PC-9 (cell line): ENCODE measurements at regions of chr2 and their contacts with region 1.

Region 1: GRCh38 chr2:71226965-71227560 is at the start of gene PAIP2B:
- DNase-seq: peak; percentile 98 to 100
- H3K4me3 ChIP-seq: peak within 1 kb of the TSS; percentile 69
- H3K27ac ChIP-seq: no peak within 1 kb of the TSS
- H3K4me1 ChIP-seq: peaks cover 10% of the 10 kb centered on the region
- H3K27me3 ChIP-seq: no peaks in the 10 kb centered on the region
- CTCF ChIP-seq: 0 out of 2 replicates have a peak, but pooled peaks have one; percentile 2
- total RNA-seq, gene PAIP2B: 5.4 and 6.1 TPM in 2 replicates

Region 2: DNA sequence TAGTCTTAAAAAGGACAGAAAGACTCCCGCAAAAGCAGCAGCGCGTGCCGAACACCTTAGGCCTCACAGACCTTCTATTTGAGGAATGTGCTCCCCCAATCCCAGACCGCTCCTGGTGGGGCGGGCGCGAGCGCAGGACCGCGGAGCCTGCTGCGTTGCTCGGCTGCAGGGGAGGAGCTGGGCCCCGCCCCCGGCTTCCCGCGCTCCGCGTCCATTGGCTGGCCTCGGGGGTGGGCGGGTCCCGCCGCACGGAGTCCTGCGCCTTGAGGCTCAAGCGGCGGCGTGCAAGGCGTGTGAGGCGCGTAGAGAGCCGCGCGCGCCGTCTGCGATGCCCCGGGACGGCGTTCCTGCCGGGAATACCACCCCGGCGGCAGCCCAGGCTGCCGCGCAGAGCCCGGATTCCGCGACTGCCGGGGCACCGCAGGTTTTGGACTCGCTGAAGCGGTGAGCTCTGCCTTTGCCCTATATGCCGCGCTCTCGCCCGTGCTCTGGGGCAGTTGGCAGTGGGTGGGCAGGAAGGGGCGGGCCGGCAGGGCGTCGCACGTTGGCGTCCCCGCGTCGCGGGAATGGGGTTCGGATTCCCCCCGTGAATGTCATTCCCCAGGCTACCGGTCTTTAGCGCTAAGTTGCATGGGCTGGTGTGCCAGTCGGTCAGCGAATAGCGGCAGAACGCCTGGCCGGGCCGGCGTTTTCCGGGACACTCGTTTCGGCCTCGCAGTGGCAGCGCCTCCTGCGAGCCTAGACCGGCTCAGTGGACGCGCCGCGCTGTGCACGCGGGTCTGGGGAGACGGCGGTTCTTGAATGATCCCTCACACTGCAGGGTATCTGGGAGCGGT is 49.5 kb after region 1 on chr2:
- CTCF ChIA-PET with region 1: interaction called, 5 read pairs
- POLR2A ChIA-PET with region 1: no interaction called
- intact Hi-C with region 1: loop called (anchors 2 kb)
- DNase-seq: peak; percentile 84 to 95
- H3K4me3 ChIP-seq: peak overlapping the region; percentile 62
- H3K27ac ChIP-seq: no peak overlapping the region
- H3K4me1 ChIP-seq: peaks cover 19% of the 10 kb centered on the region
- H3K27me3 ChIP-seq: no peaks in the 10 kb centered on the region
- CTCF ChIP-seq: no peak

Region 3: DNA sequence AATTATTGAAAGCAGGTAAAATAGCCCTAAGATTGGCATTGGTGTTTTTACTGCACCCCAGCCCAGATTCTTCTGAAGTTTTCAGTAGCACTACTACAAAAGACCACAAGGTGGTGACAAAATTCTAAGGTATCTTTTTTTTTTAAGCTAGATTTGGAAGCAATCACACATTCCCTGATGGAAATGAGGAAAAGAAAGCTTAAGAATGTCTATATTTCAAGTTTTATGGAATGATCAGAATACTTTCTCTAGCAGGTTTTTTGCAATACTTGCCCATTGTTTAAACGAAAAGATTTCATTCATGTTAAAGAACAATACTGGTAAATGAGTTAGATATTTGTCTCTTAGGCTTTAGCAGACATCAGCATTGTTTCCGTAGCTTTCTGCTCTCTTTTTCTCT is 72.4 kb after region 1 on chr2:
- CTCF ChIA-PET with region 1: no interaction called
- POLR2A ChIA-PET with region 1: no interaction called
- intact Hi-C with region 1: loop called (anchors 2 kb)
- DNase-seq: no peak
- H3K4me3 ChIP-seq: no peak overlapping the region
- H3K27ac ChIP-seq: no peak overlapping the region
- H3K4me1 ChIP-seq: no peaks in the 10 kb centered on the region
- H3K27me3 ChIP-seq: no peaks in the 10 kb centered on the region
- CTCF ChIP-seq: peak; percentile 90

Region 4: DNA sequence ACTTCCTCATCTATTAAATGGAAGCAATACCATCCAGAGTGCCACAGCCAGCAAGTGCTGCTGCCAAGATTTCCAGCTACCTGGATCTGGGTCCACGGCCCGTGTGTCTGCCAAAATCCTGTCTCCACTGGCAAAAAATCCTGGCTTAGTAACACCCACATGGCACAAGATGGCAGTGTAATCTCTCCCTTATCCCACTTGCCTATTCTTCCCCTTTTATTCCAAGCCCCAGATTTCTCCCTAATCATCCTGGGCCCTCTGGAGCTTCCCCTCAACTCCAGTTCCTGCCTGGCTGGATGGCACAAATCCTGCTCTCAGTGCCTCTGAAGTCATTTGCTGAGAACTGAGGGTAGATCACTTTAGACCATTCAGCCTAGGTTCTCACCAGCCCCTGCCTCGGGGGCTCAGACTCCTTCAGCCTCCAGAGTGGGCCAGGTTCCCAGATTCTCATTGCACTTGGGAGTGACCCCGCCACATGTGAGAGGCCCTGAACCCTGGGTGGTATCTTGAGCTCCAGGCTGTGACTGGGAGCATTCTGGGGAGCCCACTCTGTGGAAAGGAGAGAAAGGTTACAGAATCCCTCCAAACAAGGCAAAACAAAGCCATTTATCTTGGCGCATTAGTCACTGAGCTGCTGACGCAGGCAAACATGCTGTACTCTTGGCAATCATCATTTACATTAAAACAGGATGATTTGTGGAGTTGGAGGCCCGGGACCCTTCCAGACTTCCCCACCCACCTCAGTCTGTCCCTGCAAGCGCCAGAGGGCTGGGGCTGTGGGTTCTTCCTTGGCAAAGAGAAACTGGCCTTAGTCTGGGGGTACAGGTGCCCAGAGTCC is 552.1 kb after region 1 on chr2:
- CTCF ChIA-PET with region 1: no interaction called
- POLR2A ChIA-PET with region 1: no interaction called
- intact Hi-C with region 1: no loop called
- DNase-seq: no peak
- H3K4me3 ChIP-seq: no peak overlapping the region
- H3K27ac ChIP-seq: no peak overlapping the region
- H3K4me1 ChIP-seq: peaks cover 20% of the 10 kb centered on the region
- H3K27me3 ChIP-seq: no peaks in the 10 kb centered on the region
- CTCF ChIP-seq: peak; percentile 37; the same call in 1 of the 2 replicates